B cell (primary cell): ENCODE measurements at regions of chr4 and their contacts with region 1.

Region 1: DNA sequence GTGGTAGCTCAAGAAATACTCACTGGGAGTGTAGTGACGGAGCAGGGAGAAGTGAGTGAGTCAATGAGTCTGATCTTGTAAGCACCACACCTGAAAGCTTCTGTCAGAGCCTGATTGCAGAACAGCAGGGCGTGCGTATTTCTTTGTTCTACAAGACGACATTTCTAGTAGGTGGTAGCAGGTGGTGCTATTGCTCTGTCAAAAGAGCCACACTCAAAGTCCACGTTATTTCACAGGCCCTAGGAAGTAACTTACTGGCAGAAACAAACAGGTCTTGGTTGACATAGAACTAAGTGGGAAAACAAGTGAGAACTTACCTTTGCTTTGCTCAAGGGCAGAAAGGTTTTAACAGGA is 46.4 kb upstream of the SPRY1 start:
- DNase-seq: peak; percentile 21
- ATAC-seq: no peak
- H3K4me3 ChIP-seq: no peak overlapping the region
- H3K4me3 Mint-ChIP-seq: no peak overlapping the region
- H3K27ac ChIP-seq: no peak overlapping the region
- H3K27ac Mint-ChIP-seq: no peak overlapping the region
- H3K4me1 ChIP-seq: peaks cover 5 to 10% of the 10 kb centered on the region in 2 donors
- H3K4me1 Mint-ChIP-seq: peaks cover 8% of the 10 kb centered on the region
- H3K27me3 ChIP-seq: no peaks in the 10 kb centered on the region
- H3K27me3 Mint-ChIP-seq: peaks cover 13% of the 10 kb centered on the region
- CTCF ChIP-seq: no peak

Region 2: DNA sequence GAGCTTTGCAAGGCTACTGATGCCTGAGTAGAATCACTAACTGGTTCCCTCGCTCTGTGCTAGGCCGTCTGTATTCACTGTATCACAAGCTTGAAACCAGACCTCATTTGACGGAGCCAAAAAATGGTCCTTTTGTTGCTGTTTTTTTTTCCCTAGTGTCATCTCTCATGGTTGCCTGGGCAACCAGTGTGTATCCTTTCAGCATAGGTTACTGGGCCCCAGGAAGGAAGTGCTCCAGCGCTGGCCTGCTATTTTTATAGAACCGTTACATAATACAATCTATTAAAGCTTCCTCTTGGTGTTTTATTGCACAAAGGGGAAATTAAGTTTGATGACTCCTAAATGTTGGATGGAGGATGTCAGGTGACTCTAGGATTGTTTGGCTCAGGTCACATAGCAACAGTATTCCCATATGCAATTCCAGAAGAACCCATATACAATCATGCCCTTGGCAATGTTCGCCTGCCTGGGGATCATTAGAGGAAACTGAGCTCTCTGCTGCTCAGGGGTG is 266.8 kb after region 1 on chr4:
- CTCF ChIA-PET with region 1: no interaction called
- POLR2A ChIA-PET with region 1: no interaction called
- intact Hi-C with region 1: no loop called
- DNase-seq: peak; percentile 84
- ATAC-seq: peak; percentile 65
- H3K4me3 ChIP-seq: no peak overlapping the region
- H3K4me3 Mint-ChIP-seq: peak overlapping the region; percentile 8
- H3K27ac ChIP-seq: peak overlapping the region in 1 of 2 donors; percentile 37
- H3K27ac Mint-ChIP-seq: peak overlapping the region; percentile 32
- H3K4me1 ChIP-seq: peaks cover 15 to 17% of the 10 kb centered on the region in 2 donors
- H3K4me1 Mint-ChIP-seq: peaks cover 17% of the 10 kb centered on the region
- H3K27me3 ChIP-seq: no peaks in the 10 kb centered on the region
- H3K27me3 Mint-ChIP-seq: no peaks in the 10 kb centered on the region
- CTCF ChIP-seq: no peak

Region 3: GRCh38 chr4:124262211-124263179 is 912.3 kb after region 1 on chr4:
- CTCF ChIA-PET with region 1: no interaction called
- POLR2A ChIA-PET with region 1: no interaction called
- intact Hi-C with region 1: loop called (anchors 5 kb)
- DNase-seq: peak; percentile 62
- ATAC-seq: peak; percentile 51
- H3K4me3 ChIP-seq: no peak overlapping the region
- H3K4me3 Mint-ChIP-seq: no peak overlapping the region
- H3K27ac ChIP-seq: no peak overlapping the region
- H3K27ac Mint-ChIP-seq: no peak overlapping the region
- H3K4me1 ChIP-seq: no peaks in the 10 kb centered on the region
- H3K4me1 Mint-ChIP-seq: no peaks in the 10 kb centered on the region
- H3K27me3 ChIP-seq: no peaks in the 10 kb centered on the region
- H3K27me3 Mint-ChIP-seq: no peaks in the 10 kb centered on the region
- CTCF ChIP-seq: peak; percentile 88

Region 4: DNA sequence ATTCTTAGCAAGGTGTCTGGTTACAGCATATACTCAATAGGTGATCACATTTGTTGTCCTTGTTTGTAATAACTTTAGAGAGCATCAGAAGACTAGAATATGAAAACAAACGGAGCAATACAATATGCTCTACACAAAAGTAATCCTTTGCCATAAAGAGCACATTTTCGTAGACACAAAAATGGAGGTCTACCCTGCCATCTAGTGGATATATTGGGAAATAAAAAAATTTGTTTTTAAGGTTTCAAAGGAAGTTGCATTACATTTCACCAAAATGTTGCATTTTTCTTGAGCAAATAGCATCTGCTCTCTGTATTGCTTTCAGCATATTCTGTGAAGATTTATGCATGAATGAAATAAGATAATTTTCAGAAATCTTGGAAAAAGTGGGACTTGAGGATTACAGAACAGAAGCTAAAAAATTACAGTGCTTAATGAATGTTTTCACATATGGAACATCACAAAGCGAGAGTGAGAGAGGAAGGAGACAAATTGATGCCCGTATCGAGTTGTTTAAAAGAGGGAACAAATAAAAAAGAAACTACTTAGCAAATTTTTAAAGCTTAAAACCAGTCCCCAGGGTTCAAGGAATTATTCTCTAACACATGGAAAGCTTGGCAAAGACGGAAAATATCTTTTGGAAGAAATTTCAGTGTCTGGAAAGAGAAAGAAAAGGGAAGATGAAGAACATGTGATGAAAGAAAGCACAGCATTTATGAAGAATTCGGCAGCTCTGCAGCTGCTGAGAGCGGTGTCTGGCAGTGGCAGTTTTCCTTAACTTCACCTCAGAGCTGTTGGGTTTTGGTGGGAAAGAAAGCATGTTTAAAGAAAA is 972.3 kb after region 1 on chr4:
- CTCF ChIA-PET with region 1: no interaction called
- POLR2A ChIA-PET with region 1: no interaction called
- intact Hi-C with region 1: loop called (anchors 5 kb)
- DNase-seq: peak; percentile 30
- ATAC-seq: no peak
- H3K4me3 ChIP-seq: no peak overlapping the region
- H3K4me3 Mint-ChIP-seq: no peak overlapping the region
- H3K27ac ChIP-seq: no peak overlapping the region
- H3K27ac Mint-ChIP-seq: no peak overlapping the region
- H3K4me1 ChIP-seq: no peaks in the 10 kb centered on the region
- H3K4me1 Mint-ChIP-seq: no peaks in the 10 kb centered on the region
- H3K27me3 ChIP-seq: no peaks in the 10 kb centered on the region
- H3K27me3 Mint-ChIP-seq: no peaks in the 10 kb centered on the region
- CTCF ChIP-seq: peak; percentile 84